ENCODE measurements at regions of chr2 and their contacts with region 1.

Region 1: DNA sequence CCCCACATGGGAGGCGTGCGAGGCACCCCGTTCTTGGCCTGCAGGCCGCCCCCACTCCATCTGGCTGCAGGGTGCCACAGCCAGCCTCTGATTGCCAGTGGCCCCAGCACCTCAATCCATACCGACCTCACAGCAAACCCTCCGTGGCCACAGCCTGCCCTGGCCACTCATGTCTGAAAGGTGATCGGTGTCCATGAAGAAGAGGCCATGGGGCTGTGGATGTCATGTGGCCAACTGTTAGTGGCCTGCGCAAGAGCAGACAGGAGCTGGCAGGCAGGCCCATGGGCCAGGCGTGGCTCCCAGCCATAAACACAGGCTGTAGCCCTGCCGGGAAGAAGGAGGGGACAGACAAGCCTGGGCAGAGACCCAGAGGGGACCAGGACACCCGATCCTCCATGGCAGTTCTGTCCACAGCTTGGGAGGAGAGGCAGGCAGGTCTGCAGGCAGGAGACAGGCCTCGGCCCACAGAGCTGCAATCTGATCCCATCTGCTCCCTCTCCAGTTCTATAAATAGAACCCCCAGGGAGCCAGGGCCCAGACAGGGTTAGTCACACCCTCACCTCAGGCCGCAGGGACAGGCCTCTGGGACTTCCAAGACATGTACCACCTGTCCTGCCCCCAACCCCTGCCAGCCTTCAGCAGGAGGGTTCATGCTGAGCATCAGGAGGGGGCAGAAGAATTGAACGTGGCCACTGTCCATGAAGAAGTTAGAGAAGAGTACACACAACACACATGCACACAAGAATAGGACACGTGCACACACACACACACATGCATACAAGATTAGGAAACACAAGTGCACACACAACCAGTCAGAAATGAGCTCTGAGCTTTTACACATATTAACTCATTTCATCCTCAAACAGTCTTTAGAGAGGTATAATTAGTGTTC is 16.9 kb downstream of the STEAP3 start:
- DNase-seq: peak; percentile 91
- H3K4me3 ChIP-seq: no peak overlapping the region
- H3K27ac ChIP-seq: peak overlapping the region; percentile 13 to 49
- H3K4me1 ChIP-seq: peaks cover 3% of the 10 kb centered on the region
- H3K27me3 ChIP-seq: no peaks in the 10 kb centered on the region
- CTCF ChIP-seq: no peak
- POLR2A ChIP-seq: no peak

Region 2: GRCh38 chr2:118696786-118697465 is 543.6 kb before region 1 on chr2:
- intact Hi-C with region 1: no loop called
- DNase-seq: no peak
- H3K4me3 ChIP-seq: no peak overlapping the region
- H3K27ac ChIP-seq: no peak overlapping the region
- H3K4me1 ChIP-seq: no peaks in the 10 kb centered on the region
- H3K27me3 ChIP-seq: no peaks in the 10 kb centered on the region
- CTCF ChIP-seq: no peak
- POLR2A ChIP-seq: no peak

Region 3: DNA sequence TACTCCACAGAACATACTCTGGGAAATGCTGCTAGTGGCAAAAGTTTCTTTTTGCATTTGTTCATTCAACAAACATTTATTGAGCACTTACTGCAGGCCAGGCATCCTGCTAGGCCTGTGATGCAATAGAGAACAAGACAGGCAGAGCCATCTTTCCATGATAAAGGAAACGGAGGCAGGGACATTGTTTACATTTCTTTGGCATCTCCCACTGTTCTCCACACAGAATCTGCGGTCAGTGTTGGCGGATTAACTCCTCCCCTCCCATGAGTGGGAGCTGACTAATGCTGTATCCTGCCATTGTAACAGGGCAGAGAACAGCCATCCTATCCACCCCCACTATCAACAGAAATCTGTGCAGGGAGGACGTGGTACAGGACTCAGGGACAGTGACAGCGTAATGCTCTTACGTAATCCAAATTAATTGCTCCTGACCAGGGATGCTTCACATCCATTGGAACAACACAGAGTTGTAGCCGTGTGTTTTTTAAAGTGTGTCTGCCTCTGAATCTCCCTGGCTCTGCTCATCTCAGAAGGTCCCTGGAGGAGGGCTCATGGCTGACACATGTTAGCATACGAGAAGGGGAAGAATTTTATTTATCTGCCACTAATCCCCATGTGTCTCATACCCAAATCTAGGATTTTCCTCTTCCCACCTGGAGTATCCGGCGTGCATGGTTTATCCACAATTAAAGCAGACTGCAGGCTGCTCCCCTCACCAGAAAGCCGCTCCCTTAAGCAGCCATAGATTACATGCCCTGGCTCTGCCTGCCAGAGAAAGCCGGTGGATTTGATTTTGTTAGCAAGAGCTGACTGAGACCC is 15.4 kb after region 1 on chr2:
- intact Hi-C with region 1: loop called (anchors 2 kb)
- DNase-seq: no peak
- H3K4me3 ChIP-seq: no peak overlapping the region
- H3K27ac ChIP-seq: no peak overlapping the region
- H3K4me1 ChIP-seq: no peaks in the 10 kb centered on the region
- H3K27me3 ChIP-seq: no peaks in the 10 kb centered on the region
- CTCF ChIP-seq: no peak
- POLR2A ChIP-seq: no peak

Region 4: DNA sequence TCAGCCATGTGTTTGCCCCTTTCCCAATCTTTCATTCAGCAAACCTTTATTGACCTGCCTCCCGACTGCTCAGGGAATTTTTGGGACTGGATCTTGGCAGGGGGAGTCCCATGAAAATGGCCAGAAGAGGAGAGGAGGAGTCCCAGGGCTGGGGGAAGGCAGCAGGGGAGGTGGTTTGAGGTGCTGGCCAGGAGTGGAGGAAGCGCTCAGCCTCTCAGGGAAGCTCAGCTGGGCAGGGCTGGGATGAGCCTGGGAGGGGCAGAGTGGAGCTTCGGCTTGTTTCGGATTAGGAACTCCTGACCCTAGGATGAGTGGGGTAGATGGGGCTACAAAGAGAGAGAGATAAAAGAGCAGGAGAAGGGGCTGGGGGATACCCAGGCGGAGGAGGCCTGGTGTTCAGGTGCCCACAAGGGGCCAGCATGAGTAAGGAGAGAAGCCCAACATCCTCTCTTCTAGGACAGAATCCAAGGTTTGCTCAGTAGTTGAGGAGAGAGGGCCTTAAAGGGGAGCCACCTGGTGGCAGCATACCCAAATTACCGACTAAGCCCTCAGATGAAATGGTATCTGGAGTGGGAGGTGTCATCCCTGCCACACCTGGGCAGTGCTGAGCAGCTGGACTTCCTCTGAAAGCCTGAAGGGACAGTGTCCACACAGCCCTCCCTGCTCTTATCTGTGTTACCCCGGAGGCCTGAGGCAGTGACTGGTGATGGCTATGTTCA is 1196.5 kb after region 1 on chr2:
- intact Hi-C with region 1: no loop called
- DNase-seq: peak; percentile 57
- H3K4me3 ChIP-seq: no peak overlapping the region
- H3K27ac ChIP-seq: no peak overlapping the region
- H3K4me1 ChIP-seq: peaks cover 4% of the 10 kb centered on the region
- H3K27me3 ChIP-seq: no peaks in the 10 kb centered on the region
- CTCF ChIP-seq: peak in 3 of 4 experiments; percentile 48 to 75 (median 57)
- POLR2A ChIP-seq: no peak